ENCODE measurements at regions of chr10 and their contacts with region 1.

Region 1: DNA sequence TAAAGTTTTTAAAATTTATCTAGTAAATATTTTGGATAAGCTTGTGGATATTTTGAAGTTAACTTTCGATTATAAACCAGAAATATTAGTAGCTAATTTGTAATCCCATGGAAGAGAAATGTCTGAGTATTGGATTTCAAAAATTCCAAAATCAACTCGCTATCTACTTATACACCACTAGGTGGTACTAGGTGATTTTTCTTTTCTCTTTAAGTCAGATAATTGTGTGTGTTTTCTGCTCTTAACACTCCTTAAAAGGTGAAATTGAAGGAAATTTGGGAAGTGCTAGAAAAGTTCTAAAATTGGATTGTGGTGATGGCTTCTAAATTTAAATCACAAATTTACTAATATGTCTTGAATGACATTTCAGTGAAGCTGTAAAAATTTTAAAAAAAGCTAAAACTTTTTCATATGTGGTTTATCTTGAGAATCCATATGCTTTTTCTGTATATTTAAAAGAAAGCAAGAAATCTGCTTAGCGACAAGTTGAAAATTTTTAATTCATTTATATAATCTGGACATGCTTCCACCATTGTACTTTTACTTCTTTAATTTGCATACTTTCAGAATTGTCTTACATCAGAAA is 90.2 kb downstream of the IPMK start:
- DNase-seq: no peak
- ATAC-seq: no peak
- H3K4me3 ChIP-seq: no peak overlapping the region
- H3K27ac ChIP-seq: no peak overlapping the region
- H3K4me1 ChIP-seq: no peaks in the 10 kb centered on the region
- H3K27me3 ChIP-seq: no peaks in the 10 kb centered on the region

Region 2: GRCh38 chr10:58291538-58292174 is 114.2 kb after region 1 on chr10:
- intact Hi-C with region 1: loop called (anchors 5 to 10 kb)
- DNase-seq: no peak
- ATAC-seq: peak; percentile 43 to 74
- H3K4me3 ChIP-seq: no peak overlapping the region
- H3K27ac ChIP-seq: no peak overlapping the region
- H3K4me1 ChIP-seq: no peaks in the 10 kb centered on the region
- H3K27me3 ChIP-seq: no peaks in the 10 kb centered on the region

Region 3: GRCh38 chr10:58299580-58299979 is 122.1 kb after region 1 on chr10:
- intact Hi-C with region 1: loop called (anchors 5 to 10 kb)
- DNase-seq: peak in 2 of 3 donors; percentile 28 to 55
- ATAC-seq: peak; percentile 71 to 79
- H3K4me3 ChIP-seq: no peak overlapping the region
- H3K27ac ChIP-seq: no peak overlapping the region
- H3K4me1 ChIP-seq: no peaks in the 10 kb centered on the region
- H3K27me3 ChIP-seq: no peaks in the 10 kb centered on the region